Activated CD8-positive, alpha-beta T cell treated with anti-CD3 and anti-CD28 coated beads for 36 hours (primary cell): ENCODE measurements at regions of chr20 and their contacts with region 1.

Region 1: GRCh38 chr20:4956200-4956810 is 45.0 kb downstream of the SLC23A2 start:
- DNase-seq: no peak
- ATAC-seq: peak; percentile 70
- H3K4me3 Mint-ChIP-seq: no peak overlapping the region
- H3K27ac Mint-ChIP-seq: no peak overlapping the region
- H3K4me1 Mint-ChIP-seq: peaks cover 9% of the 10 kb centered on the region
- H3K27me3 Mint-ChIP-seq: no peaks in the 10 kb centered on the region
- CTCF ChIP-seq: peak; percentile 87

Region 2: DNA sequence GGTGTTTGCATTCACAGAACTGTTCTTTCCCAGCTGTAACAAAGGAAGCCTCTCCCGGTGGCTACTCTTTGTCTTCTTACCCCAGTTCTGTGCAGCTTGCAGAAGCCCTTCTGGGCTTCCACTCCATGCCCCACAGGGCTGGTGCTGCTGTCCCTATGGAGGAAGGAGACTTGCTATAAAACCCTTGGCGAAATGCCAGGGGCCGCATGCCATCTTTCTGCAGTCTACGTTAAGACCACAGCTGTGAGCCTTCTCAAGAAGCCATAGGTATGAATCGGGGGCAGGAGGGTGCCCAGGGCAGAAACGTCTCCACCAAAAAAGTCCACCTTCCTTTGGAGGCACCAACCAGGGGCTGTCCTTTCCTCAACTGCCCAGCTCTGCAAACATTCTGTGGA is 173.9 kb before region 1 on chr20:
- CTCF ChIA-PET with region 1: interaction called, 11 read pairs
- POLR2A ChIA-PET with region 1: no interaction called
- intact Hi-C with region 1: no loop called
- DNase-seq: no peak
- ATAC-seq: no peak
- H3K4me3 Mint-ChIP-seq: no peak overlapping the region
- H3K27ac Mint-ChIP-seq: no peak overlapping the region
- H3K4me1 Mint-ChIP-seq: peaks cover 6% of the 10 kb centered on the region
- H3K27me3 Mint-ChIP-seq: no peaks in the 10 kb centered on the region
- CTCF ChIP-seq: no peak

Region 3: GRCh38 chr20:4912380-4913142 is 43.7 kb before region 1 on chr20:
- CTCF ChIA-PET with region 1: interaction called, 10 read pairs
- POLR2A ChIA-PET with region 1: no interaction called
- intact Hi-C with region 1: no loop called
- DNase-seq: peak; percentile 24
- ATAC-seq: peak; percentile 61
- H3K4me3 Mint-ChIP-seq: no peak overlapping the region
- H3K27ac Mint-ChIP-seq: no peak overlapping the region
- H3K4me1 Mint-ChIP-seq: peaks cover 11% of the 10 kb centered on the region
- H3K27me3 Mint-ChIP-seq: no peaks in the 10 kb centered on the region
- CTCF ChIP-seq: no peak

Region 4: GRCh38 chr20:4942331-4942730 is 14.0 kb before region 1 on chr20:
- CTCF ChIA-PET with region 1: interaction called, 13 read pairs
- POLR2A ChIA-PET with region 1: no interaction called
- intact Hi-C with region 1: no loop called
- DNase-seq: no peak
- ATAC-seq: no peak
- H3K4me3 Mint-ChIP-seq: no peak overlapping the region
- H3K27ac Mint-ChIP-seq: no peak overlapping the region
- H3K4me1 Mint-ChIP-seq: peaks cover 16% of the 10 kb centered on the region
- H3K27me3 Mint-ChIP-seq: no peaks in the 10 kb centered on the region
- CTCF ChIP-seq: no peak

Region 5: GRCh38 chr20:4966826-4967751 is 10.8 kb after region 1 on chr20:
- CTCF ChIA-PET with region 1: interaction called, 15 read pairs
- POLR2A ChIA-PET with region 1: no interaction called
- intact Hi-C with region 1: no loop called
- DNase-seq: no peak
- ATAC-seq: no peak
- H3K4me3 Mint-ChIP-seq: no peak overlapping the region
- H3K27ac Mint-ChIP-seq: peak overlapping the region; percentile 26
- H3K4me1 Mint-ChIP-seq: peaks cover 5% of the 10 kb centered on the region
- H3K27me3 Mint-ChIP-seq: no peaks in the 10 kb centered on the region
- CTCF ChIP-seq: no peak

Region 6: DNA sequence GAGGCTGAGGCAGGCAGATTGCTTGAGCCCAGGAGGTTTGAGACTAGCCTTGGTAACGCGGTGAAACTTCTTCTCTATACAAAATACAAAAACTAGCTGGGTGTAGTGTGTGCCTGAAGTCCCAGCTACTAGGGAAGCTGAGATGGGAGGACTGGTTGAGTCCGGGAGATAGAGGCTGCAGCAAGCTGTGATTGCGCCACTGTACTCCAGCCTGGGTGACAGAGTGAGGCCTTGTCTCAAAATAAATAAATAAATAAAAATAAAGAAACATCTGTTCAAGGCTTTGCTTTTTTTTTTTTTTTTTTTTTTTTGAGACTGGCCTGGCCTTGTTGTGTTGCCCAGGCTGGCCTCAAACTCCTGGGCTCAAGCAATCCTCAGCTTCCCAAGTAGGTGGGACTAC is 68.7 kb after region 1 on chr20:
- CTCF ChIA-PET with region 1: no interaction called
- POLR2A ChIA-PET with region 1: no interaction called
- intact Hi-C with region 1: no loop called
- DNase-seq: no peak
- ATAC-seq: no peak
- H3K4me3 Mint-ChIP-seq: no peak overlapping the region
- H3K27ac Mint-ChIP-seq: no peak overlapping the region
- H3K4me1 Mint-ChIP-seq: peaks cover 3% of the 10 kb centered on the region
- H3K27me3 Mint-ChIP-seq: no peaks in the 10 kb centered on the region
- CTCF ChIP-seq: no peak